ENCODE measurements at regions of chr3 and their contacts with region 1.

Region 1: GRCh38 chr3:56801662-56802377 is at the start of gene ARHGEF3:
- DNase-seq: peak; percentile 92
- H3K4me3 Mint-ChIP-seq: peak within 1 kb of the TSS; percentile 84
- H3K27ac Mint-ChIP-seq: peak within 1 kb of the TSS; percentile 76
- H3K4me1 Mint-ChIP-seq: peaks cover 42% of the 10 kb centered on the region
- H3K27me3 Mint-ChIP-seq: no peaks in the 10 kb centered on the region
- total RNA-seq, gene ARHGEF3: 28.0 to 31.5 TPM

Region 2: GRCh38 chr3:56556908-56557830 is 244.7 kb before region 1 on chr3 and contains the start of gene CCDC66:
- CTCF ChIA-PET with region 1: no interaction called
- POLR2A ChIA-PET with region 1: no interaction called
- intact Hi-C with region 1: loop called (anchors 2 kb)
- DNase-seq: peak; percentile 96
- H3K4me3 Mint-ChIP-seq: peak within 1 kb of the TSS; percentile 87
- H3K27ac Mint-ChIP-seq: peak within 1 kb of the TSS; percentile 92
- H3K4me1 Mint-ChIP-seq: peaks cover 24% of the 10 kb centered on the region
- H3K27me3 Mint-ChIP-seq: no peaks in the 10 kb centered on the region
- total RNA-seq, gene CCDC66: 21.0 to 29.4 TPM

Region 3: DNA sequence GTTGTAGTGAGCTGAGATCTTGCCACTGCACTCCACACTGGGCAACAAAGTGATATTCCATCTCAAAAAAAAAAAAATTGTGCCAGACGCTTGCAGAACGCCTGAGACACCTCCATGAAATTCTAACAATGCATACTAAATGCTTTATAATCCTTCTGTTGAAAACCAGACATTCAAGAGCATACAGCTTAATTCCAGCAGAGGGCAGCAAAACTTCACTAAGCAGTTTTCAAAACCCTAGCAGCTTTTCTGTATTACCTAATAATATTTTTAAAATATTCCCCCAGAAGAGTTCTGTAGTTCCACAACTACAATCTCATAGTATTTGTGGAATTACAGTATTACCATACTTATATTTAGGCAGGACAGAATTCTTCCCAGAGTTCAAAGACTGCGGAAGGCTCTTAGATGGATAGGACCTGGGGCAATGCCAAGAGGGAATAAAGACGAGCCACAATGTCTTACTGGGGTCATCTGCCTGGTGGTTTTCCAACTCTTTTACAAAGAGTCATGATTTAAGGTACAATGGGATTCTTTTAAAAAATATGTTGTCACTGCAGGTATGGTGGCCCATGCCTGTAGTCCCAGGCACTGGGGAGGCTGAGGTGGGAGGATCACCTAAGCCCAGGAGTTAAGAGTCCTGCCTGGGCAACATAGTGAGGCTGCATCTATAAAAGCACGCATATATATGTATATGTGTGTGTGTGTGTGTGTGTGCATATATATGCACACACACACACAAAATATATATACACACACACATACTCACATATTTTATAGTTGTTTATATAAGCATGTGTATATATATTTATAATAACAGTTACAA is 99.1 kb before region 1 on chr3:
- CTCF ChIA-PET with region 1: interaction called, 282 read pairs
- POLR2A ChIA-PET with region 1: interaction called, 23 read pairs
- intact Hi-C with region 1: loop called (anchors 1 kb)
- DNase-seq: peak; percentile 36
- H3K4me3 Mint-ChIP-seq: no peak overlapping the region
- H3K27ac Mint-ChIP-seq: no peak overlapping the region
- H3K4me1 Mint-ChIP-seq: peaks cover 11% of the 10 kb centered on the region
- H3K27me3 Mint-ChIP-seq: no peaks in the 10 kb centered on the region

Region 4: GRCh38 chr3:56758539-56758981 is 43.3 kb before region 1 on chr3:
- CTCF ChIA-PET with region 1: interaction called, 82 read pairs
- POLR2A ChIA-PET with region 1: interaction called, 5 read pairs
- intact Hi-C with region 1: loop called (anchors 1 kb)
- DNase-seq: peak; percentile 62
- H3K4me3 Mint-ChIP-seq: peak overlapping the region; percentile 66
- H3K27ac Mint-ChIP-seq: peak overlapping the region; percentile 86
- H3K4me1 Mint-ChIP-seq: peaks cover 73% of the 10 kb centered on the region
- H3K27me3 Mint-ChIP-seq: no peaks in the 10 kb centered on the region

Region 5: GRCh38 chr3:56790016-56790821 is 11.6 kb before region 1 on chr3:
- CTCF ChIA-PET with region 1: interaction called, 263 read pairs
- POLR2A ChIA-PET with region 1: interaction called, 47 read pairs
- intact Hi-C with region 1: loop called (anchors 1 kb)
- DNase-seq: peak; percentile 41
- H3K4me3 Mint-ChIP-seq: peak overlapping the region; percentile 8
- H3K27ac Mint-ChIP-seq: peak overlapping the region; percentile 81
- H3K4me1 Mint-ChIP-seq: peaks cover 82% of the 10 kb centered on the region
- H3K27me3 Mint-ChIP-seq: no peaks in the 10 kb centered on the region

Region 6: GRCh38 chr3:56915966-56916586 is 114.3 kb after region 1 on chr3:
- CTCF ChIA-PET with region 1: interaction called, 64 read pairs
- POLR2A ChIA-PET with region 1: interaction called, 26 read pairs
- intact Hi-C with region 1: loop called (anchors 1 kb)
- DNase-seq: peak; percentile 87
- H3K4me3 Mint-ChIP-seq: peak overlapping the region; percentile 74
- H3K27ac Mint-ChIP-seq: peak overlapping the region; percentile 92
- H3K4me1 Mint-ChIP-seq: peaks cover 69% of the 10 kb centered on the region
- H3K27me3 Mint-ChIP-seq: no peaks in the 10 kb centered on the region

Region 7: DNA sequence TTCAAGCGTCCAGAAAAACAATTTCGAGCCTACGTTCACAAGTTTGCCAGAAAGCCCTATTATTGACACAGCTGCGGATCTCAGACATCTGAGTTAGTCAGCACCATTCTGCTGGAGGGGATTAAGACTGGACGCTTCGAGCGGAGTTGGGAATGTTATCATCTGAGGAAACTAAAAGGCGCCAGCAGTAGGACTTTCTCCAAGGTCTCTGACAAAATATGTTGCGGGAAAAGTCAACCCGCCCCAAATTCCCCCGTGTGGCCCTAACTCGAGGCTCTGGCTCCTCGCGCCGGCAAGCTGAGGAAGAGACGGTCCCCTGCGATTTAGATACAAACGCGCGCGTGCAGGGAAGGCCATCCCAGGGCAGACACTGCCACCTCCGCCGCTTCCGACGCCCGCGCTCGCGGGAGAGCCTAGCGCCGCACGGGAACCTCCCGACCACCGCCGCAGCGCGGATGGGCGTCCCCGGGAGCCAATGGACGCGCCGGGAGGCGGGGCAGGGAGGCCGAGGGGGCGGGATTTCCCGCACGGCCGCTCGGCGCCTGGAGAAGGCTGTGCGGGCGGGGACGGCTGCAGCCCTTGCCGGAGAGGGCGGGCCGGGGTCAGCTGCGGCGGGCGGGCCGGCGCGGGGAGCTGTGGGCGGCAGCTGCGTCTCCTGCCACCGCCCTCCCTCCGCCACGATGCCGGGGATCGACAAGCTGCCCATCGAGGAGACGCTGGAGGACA is 425.5 kb after region 1 on chr3 and contains the start of gene APPL1:
- CTCF ChIA-PET with region 1: no interaction called
- POLR2A ChIA-PET with region 1: no interaction called
- intact Hi-C with region 1: loop called (anchors 5 kb)
- DNase-seq: peak; percentile 94
- H3K4me3 Mint-ChIP-seq: peak within 1 kb of the TSS; percentile 89
- H3K27ac Mint-ChIP-seq: peak within 1 kb of the TSS; percentile 75
- H3K4me1 Mint-ChIP-seq: peaks cover 28% of the 10 kb centered on the region
- H3K27me3 Mint-ChIP-seq: no peaks in the 10 kb centered on the region
- total RNA-seq, gene APPL1: 34.7 to 34.9 TPM

Measured in activated CD4-positive, alpha-beta memory T cell treated with anti-CD3 and anti-CD28 coated beads for 36 hours (primary cell).